Right ventricle myocardium inferior (tissue), 1 donor: ENCODE measurements at regions of chr6 and their contacts with region 1.

Region 1: GRCh38 chr6:11424395-11425050 is 113.0 kb upstream of the TMEM170B start:
- DNase-seq: no peak
- ATAC-seq: no peak

Region 2: GRCh38 chr6:11224252-11224965 is 200.1 kb before region 1 on chr6:
- intact Hi-C with region 1: loop called (anchors 5 kb)
- DNase-seq: no peak
- ATAC-seq: no peak